Posterior vena cava (tissue), 2 donors: ENCODE measurements at regions of chr10 and their contacts with region 1.

Region 1: GRCh38 chr10:67697724-67698131 is 1.7 kb upstream of the CTNNA3 start:
- DNase-seq: no peak

Region 2: GRCh38 chr10:67764012-67764822 is 66.5 kb after region 1 on chr10:
- intact Hi-C with region 1: loop called in 1 of 2 experiments (anchors 10 kb)
- DNase-seq: peak; percentile 97

Region 3: GRCh38 chr10:67779465-67780203 is 81.9 kb after region 1 on chr10:
- intact Hi-C with region 1: loop called in 1 of 2 experiments (anchors 5 kb)
- DNase-seq: no peak